Activated CD4-positive, alpha-beta T cell treated with anti-CD3 and anti-CD28 coated beads for 36 hours (primary cell): ENCODE measurements at regions of chr18 and their contacts with region 1.

Region 1: GRCh38 chr18:63439334-63439733 is 17.1 kb upstream of the VPS4B start:
- DNase-seq: peak; percentile 56
- ATAC-seq: peak; percentile 36
- H3K4me3 Mint-ChIP-seq: no peak overlapping the region
- H3K27ac Mint-ChIP-seq: no peak overlapping the region
- H3K4me1 Mint-ChIP-seq: no peaks in the 10 kb centered on the region
- H3K27me3 Mint-ChIP-seq: peaks cover 3% of the 10 kb centered on the region

Region 2: GRCh38 chr18:63131106-63131958 is 308.0 kb before region 1 on chr18:
- CTCF ChIA-PET with region 1: interaction called, 6 read pairs
- POLR2A ChIA-PET with region 1: no interaction called
- intact Hi-C with region 1: loop called (anchors 5 kb)
- DNase-seq: peak; percentile 69
- ATAC-seq: peak; percentile 60
- H3K4me3 Mint-ChIP-seq: no peak overlapping the region
- H3K27ac Mint-ChIP-seq: peak overlapping the region; percentile 74
- H3K4me1 Mint-ChIP-seq: peaks cover 29% of the 10 kb centered on the region
- H3K27me3 Mint-ChIP-seq: no peaks in the 10 kb centered on the region

Region 3: GRCh38 chr18:63339920-63340484 is 99.3 kb before region 1 on chr18:
- CTCF ChIA-PET with region 1: interaction called, 58 read pairs
- POLR2A ChIA-PET with region 1: no interaction called
- intact Hi-C with region 1: loop called (anchors 1 kb)
- DNase-seq: peak; percentile 67
- ATAC-seq: peak; percentile 58
- H3K4me3 Mint-ChIP-seq: no peak overlapping the region
- H3K27ac Mint-ChIP-seq: no peak overlapping the region
- H3K4me1 Mint-ChIP-seq: peaks cover 14% of the 10 kb centered on the region
- H3K27me3 Mint-ChIP-seq: no peaks in the 10 kb centered on the region

Region 4: GRCh38 chr18:63367053-63367953 is 72.0 kb before region 1 on chr18 and contains the start of gene KDSR:
- CTCF ChIA-PET with region 1: interaction called, 15 read pairs
- POLR2A ChIA-PET with region 1: interaction called, 3 read pairs
- intact Hi-C with region 1: loop called (anchors 1 to 2 kb)
- DNase-seq: peak; percentile 92
- ATAC-seq: peak; percentile 85
- H3K4me3 Mint-ChIP-seq: peak within 1 kb of the TSS; percentile 96
- H3K27ac Mint-ChIP-seq: peak within 1 kb of the TSS; percentile 85
- H3K4me1 Mint-ChIP-seq: peaks cover 36% of the 10 kb centered on the region
- H3K27me3 Mint-ChIP-seq: no peaks in the 10 kb centered on the region
- total RNA-seq, gene KDSR: 72.6 to 78.6 TPM

Region 5: GRCh38 chr18:63427558-63427957 is 11.8 kb before region 1 on chr18:
- CTCF ChIA-PET with region 1: interaction called, 12 read pairs
- POLR2A ChIA-PET with region 1: no interaction called
- intact Hi-C with region 1: loop called in 1 of 2 experiments (anchors 2 kb)
- DNase-seq: peak; percentile 45
- ATAC-seq: peak; percentile 67
- H3K4me3 Mint-ChIP-seq: no peak overlapping the region
- H3K27ac Mint-ChIP-seq: no peak overlapping the region
- H3K4me1 Mint-ChIP-seq: peaks cover 16% of the 10 kb centered on the region
- H3K27me3 Mint-ChIP-seq: peaks cover 9% of the 10 kb centered on the region